PC-3 (cell line): ENCODE measurements at regions of chr11 and their contacts with region 1.

Region 1: GRCh38 chr11:107676336-107677057 is 35.4 kb downstream of the SLN start:
- DNase-seq: no peak
- ATAC-seq: no peak
- H3K4me3 ChIP-seq: no peak overlapping the region
- H3K27ac ChIP-seq: no peak overlapping the region
- H3K4me1 ChIP-seq: no peaks in the 10 kb centered on the region
- H3K27me3 ChIP-seq: peaks cover 84% of the 10 kb centered on the region
- CTCF ChIP-seq: no peak

Region 2: GRCh38 chr11:107720303-107720774 is 43.8 kb after region 1 on chr11:
- CTCF ChIA-PET with region 1: no interaction called
- POLR2A ChIA-PET with region 1: no interaction called
- intact Hi-C with region 1: no loop called
- DNase-seq: no peak
- ATAC-seq: peak; percentile 18
- H3K4me3 ChIP-seq: no peak overlapping the region
- H3K27ac ChIP-seq: no peak overlapping the region
- H3K4me1 ChIP-seq: no peaks in the 10 kb centered on the region
- H3K27me3 ChIP-seq: peaks cover 60% of the 10 kb centered on the region
- CTCF ChIP-seq: no peak

Region 3: DNA sequence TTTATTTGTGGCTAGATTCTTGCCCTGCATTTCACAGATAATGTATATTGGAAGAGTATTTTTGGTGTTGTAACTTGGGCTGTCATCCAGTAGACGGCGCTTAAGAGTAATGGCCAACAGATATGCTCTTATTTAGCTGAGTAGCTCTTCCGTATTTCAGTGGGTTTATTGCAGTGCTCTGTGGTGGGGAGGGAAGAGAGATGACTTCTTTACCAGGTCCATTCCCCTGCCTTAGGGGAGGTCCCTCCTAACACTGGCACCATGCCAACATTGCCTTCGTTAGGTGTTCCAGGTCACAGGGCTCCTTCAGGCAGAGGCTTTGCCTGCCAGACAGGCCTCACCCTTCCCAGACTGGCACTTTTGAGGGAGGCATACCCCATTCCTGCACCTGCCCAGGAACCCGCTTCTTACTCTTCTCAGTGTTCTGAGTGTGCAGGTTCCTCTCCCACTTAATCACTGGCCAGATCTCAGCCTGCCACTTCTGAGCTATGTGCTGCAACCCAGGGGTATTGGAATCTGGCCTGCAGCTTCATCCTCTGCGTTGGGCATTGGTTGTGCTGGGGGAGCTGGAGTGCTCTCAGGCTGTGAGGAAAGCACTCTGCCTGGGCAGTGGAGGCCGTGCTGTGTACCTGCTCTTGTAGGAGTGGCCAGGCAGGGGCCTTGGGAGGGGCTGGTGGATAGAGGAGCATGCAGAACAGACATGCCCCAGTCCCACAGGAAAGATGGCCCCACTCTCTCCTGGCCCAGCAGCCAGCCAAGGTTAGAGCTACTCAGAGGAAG is 64.7 kb after region 1 on chr11:
- CTCF ChIA-PET with region 1: interaction called, 10 read pairs
- POLR2A ChIA-PET with region 1: no interaction called
- intact Hi-C with region 1: no loop called
- DNase-seq: peak; percentile 73
- ATAC-seq: peak; percentile 86
- H3K4me3 ChIP-seq: no peak overlapping the region
- H3K27ac ChIP-seq: no peak overlapping the region
- H3K4me1 ChIP-seq: no peaks in the 10 kb centered on the region
- H3K27me3 ChIP-seq: peaks cover 45% of the 10 kb centered on the region
- CTCF ChIP-seq: peak; percentile 98